ENCODE measurements at regions of chr11 and their contacts with region 1.

Region 1: DNA sequence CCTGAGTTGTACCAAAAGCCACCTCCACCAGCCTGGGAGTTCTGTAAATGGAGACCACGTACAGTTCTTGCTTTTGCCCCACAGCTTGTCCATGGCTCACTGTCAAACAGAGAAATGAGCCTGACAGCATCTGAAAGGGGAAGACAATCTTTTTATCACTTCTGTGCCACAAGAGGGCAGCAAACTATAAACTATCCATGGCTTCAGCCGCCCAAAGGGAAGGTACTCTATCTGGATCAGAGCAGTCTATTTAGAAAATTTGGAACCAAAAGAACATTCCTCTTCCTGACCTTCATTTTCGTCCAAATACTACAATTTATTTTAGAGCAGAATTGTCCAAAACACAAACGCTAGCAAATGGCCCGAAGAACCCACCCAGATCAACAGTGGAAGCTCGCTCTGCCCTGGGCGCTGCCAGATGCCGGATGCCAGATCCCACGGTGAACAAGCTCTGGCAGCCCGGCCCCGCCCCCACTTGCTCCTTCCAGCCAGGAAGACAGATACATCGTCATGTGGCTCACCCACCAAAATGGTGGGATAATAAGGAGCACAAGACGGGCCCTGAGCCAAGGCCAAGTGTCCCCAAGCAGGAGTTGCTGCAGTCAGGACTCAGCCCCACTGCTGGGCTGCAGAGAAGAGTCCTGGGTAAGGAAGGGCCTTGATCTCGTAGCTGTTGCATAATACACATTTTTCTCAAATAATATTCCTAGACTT is 23.9 kb upstream of the SCGB1A1 start:
- DNase-seq: peak; percentile 71
- ATAC-seq: peak; percentile 90
- H3K4me3 Mint-ChIP-seq: no peak overlapping the region
- H3K27ac Mint-ChIP-seq: no peak overlapping the region
- H3K4me1 Mint-ChIP-seq: peaks cover 6% of the 10 kb centered on the region
- H3K27me3 Mint-ChIP-seq: peaks cover 13% of the 10 kb centered on the region

Region 2: GRCh38 chr11:62269650-62270278 is 125.2 kb before region 1 on chr11 and contains the start of gene SCGB2A2:
- CTCF ChIA-PET with region 1: no interaction called
- DNase-seq: no peak
- ATAC-seq: no peak
- H3K4me3 Mint-ChIP-seq: no peak within 1 kb of the TSS
- H3K27ac Mint-ChIP-seq: no peak within 1 kb of the TSS
- H3K4me1 Mint-ChIP-seq: no peaks in the 10 kb centered on the region
- H3K27me3 Mint-ChIP-seq: peaks cover 11% of the 10 kb centered on the region
- total RNA-seq, gene SCGB2A2: not detected

Region 3: DNA sequence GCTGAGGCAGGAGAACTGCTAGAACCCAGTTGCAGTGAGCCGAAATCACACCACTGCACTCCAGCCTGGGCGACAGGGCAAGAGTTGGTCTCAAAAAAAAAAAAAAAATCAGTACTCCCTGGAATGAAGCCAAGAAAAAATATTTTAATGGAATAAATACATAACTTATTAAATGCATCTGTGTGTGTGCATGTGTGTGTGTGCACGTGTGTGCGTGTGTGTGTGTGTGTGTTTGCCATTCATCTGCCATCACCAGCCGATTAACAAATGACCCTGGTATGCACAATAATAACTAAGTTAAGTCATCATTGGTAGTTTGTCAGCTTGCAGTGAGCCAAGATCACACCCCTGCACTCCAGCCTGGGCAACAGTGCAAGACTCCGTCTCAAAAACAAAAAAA is 11.2 kb before region 1 on chr11:
- CTCF ChIA-PET with region 1: interaction called, 32 read pairs
- DNase-seq: no peak
- ATAC-seq: no peak
- H3K4me3 Mint-ChIP-seq: no peak overlapping the region
- H3K27ac Mint-ChIP-seq: no peak overlapping the region
- H3K4me1 Mint-ChIP-seq: peaks cover 16% of the 10 kb centered on the region
- H3K27me3 Mint-ChIP-seq: peaks cover 56% of the 10 kb centered on the region

Region 4: GRCh38 chr11:62419314-62419929 is 24.4 kb after region 1 on chr11:
- CTCF ChIA-PET with region 1: interaction called, 73 read pairs
- DNase-seq: no peak
- ATAC-seq: no peak
- H3K4me3 Mint-ChIP-seq: no peak overlapping the region
- H3K27ac Mint-ChIP-seq: no peak overlapping the region
- H3K4me1 Mint-ChIP-seq: peaks cover 2% of the 10 kb centered on the region
- H3K27me3 Mint-ChIP-seq: peaks cover 9% of the 10 kb centered on the region

Region 5: DNA sequence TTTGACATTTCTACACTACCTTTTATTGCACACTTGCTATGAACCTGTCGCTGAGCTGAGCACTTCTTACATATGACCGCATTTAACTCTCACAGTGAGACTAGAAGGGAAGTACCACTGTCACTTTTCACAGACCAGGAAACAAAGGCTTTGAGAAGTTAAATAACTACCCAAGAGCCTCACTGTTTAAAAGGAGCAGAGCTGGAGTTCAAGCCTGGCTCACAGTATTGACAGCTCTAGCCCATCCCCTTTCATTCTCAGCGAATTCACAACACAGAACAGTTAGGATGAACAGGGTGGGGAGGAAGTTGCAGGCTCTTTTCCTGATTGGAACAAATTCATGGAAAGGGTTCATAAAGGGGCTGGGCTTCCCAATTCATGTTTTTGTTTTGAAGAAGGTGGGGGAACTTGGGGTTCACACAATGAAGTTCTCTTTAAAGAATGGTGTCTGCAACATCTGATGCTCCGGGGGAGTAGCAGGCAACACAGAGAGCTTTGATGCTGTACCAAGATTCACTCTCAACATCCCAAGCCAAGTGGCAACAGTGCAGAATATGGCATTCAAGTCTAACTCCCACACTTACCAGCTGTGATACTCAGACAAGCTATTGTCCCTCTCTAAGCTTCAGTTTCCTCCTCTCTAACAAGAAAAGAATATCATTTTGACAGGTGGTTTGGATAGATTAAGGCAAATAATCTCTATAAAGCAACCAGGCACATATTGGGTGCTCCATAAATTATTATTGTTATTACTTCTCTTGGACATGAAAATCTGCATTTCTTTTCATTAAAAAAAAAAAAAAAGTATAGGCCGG is 41.1 kb after region 1 on chr11:
- CTCF ChIA-PET with region 1: no interaction called
- DNase-seq: no peak
- ATAC-seq: peak; percentile 53
- H3K4me3 Mint-ChIP-seq: no peak overlapping the region
- H3K27ac Mint-ChIP-seq: no peak overlapping the region
- H3K4me1 Mint-ChIP-seq: peaks cover 39% of the 10 kb centered on the region
- H3K27me3 Mint-ChIP-seq: no peaks in the 10 kb centered on the region

Region 6: GRCh38 chr11:62556108-62556871 is 161.3 kb after region 1 on chr11:
- CTCF ChIA-PET with region 1: interaction called, 40 read pairs
- DNase-seq: peak; percentile 98
- ATAC-seq: peak; percentile 64
- H3K4me3 Mint-ChIP-seq: peak overlapping the region; percentile 65
- H3K27ac Mint-ChIP-seq: peak overlapping the region; percentile 96
- H3K4me1 Mint-ChIP-seq: peaks cover 96% of the 10 kb centered on the region
- H3K27me3 Mint-ChIP-seq: peaks cover 2% of the 10 kb centered on the region

Region 7: GRCh38 chr11:62694455-62695167 is 299.6 kb after region 1 on chr11:
- CTCF ChIA-PET with region 1: interaction called, 17 read pairs
- DNase-seq: peak; percentile 85
- ATAC-seq: peak; percentile 88
- H3K4me3 Mint-ChIP-seq: no peak overlapping the region
- H3K27ac Mint-ChIP-seq: no peak overlapping the region
- H3K4me1 Mint-ChIP-seq: peaks cover 5% of the 10 kb centered on the region
- H3K27me3 Mint-ChIP-seq: no peaks in the 10 kb centered on the region

Measured in activated CD8-positive, alpha-beta memory T cell treated with anti-CD3 and anti-CD28 coated beads, Interleukin-2, amount 10 ng/mL, durations not matched to agents 7 days and 5 days (primary cell).